ENCODE measurements at regions of chr17 and their contacts with region 1.

Region 1: DNA sequence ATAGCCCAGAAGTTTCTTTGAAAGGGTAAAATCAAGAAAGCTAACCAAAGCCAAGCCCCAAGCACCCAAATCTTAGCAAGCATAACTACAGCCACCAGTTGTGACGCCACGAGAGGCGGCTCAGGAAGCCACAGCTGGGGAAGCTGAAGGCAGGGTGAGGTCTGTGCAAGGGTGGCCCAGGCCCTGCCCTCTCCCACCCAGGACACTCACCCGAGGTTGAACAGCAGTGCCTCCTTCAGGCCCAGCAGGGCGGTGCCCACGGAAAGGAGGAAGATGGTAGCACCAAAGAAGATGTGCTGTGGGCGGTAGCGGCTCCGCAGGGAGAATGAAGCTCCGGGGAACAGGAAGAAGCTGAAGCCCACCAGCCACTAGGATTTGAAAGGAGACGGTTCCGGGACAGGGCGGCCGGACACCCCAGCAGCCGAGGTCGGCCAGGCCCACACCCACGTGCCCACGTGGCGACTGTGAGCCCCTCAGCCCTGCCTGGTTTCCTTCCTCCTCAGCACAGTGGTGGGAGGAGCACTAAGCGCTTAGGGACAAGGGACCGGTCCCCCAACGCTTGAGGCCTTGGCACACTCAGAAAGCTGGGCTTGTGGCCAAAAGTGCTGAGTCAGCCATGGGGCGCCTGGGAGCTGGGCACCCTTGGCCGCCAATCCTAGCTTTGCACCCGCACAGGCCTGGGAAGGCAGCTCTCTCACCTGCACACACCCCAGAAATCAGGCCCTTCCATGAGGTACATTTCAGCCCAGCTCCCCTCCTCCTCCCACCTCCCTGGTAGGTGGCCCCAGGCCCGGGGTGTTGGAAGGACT is 11.0 kb downstream of the CYB561 start:
- H3K4me3 ChIP-seq: no peak overlapping the region
- H3K27ac ChIP-seq: no peak overlapping the region
- H3K4me1 ChIP-seq: no peaks in the 10 kb centered on the region; the same call in 1 of the 2 replicates
- CTCF ChIP-seq: no peak

Region 2: DNA sequence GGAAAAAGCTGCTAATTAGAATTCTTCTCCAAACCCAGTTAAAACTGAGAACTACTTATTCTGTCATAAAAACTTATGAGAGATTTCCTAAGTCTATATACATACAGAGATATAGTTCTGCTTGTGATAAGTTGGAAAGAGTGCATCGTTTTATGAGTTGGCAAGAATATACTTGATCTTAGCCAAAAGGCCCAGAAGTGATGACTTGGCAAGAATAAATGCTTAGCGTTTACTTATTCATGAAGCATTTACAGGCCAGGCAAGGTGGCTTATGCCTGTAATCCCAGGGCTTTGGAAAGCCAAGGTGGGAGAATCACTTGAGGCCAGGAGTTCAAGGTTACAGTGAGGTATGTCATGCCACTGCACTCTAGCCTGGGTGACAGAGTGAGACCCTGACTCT is 70.7 kb before region 1 on chr17:
- CTCF ChIA-PET with region 1: no interaction called
- POLR2A ChIA-PET with region 1: no interaction called
- H3K4me3 ChIP-seq: no peak overlapping the region
- H3K27ac ChIP-seq: no peak overlapping the region
- H3K4me1 ChIP-seq: no peaks in the 10 kb centered on the region
- CTCF ChIP-seq: no peak

Region 3: GRCh38 chr17:63414222-63414621 is 20.9 kb before region 1 on chr17:
- CTCF ChIA-PET with region 1: no interaction called
- POLR2A ChIA-PET with region 1: no interaction called
- H3K4me3 ChIP-seq: no peak overlapping the region
- H3K27ac ChIP-seq: no peak overlapping the region
- H3K4me1 ChIP-seq: no peaks in the 10 kb centered on the region
- CTCF ChIP-seq: no peak

Region 4: GRCh38 chr17:63445979-63446691 is 11.1 kb after region 1 on chr17 and contains the start of gene CYB561:
- CTCF ChIA-PET with region 1: interaction called, 15 read pairs
- POLR2A ChIA-PET with region 1: interaction called, 4 read pairs
- H3K4me3 ChIP-seq: peak within 1 kb of the TSS; percentile 41
- H3K27ac ChIP-seq: peak within 1 kb of the TSS; percentile 48; the same call in 1 of the 2 replicates
- H3K4me1 ChIP-seq: 0 out of 2 replicates have a peak, but pooled peaks cover 2% of the 10 kb centered on the region
- CTCF ChIP-seq: no peak

Region 5: DNA sequence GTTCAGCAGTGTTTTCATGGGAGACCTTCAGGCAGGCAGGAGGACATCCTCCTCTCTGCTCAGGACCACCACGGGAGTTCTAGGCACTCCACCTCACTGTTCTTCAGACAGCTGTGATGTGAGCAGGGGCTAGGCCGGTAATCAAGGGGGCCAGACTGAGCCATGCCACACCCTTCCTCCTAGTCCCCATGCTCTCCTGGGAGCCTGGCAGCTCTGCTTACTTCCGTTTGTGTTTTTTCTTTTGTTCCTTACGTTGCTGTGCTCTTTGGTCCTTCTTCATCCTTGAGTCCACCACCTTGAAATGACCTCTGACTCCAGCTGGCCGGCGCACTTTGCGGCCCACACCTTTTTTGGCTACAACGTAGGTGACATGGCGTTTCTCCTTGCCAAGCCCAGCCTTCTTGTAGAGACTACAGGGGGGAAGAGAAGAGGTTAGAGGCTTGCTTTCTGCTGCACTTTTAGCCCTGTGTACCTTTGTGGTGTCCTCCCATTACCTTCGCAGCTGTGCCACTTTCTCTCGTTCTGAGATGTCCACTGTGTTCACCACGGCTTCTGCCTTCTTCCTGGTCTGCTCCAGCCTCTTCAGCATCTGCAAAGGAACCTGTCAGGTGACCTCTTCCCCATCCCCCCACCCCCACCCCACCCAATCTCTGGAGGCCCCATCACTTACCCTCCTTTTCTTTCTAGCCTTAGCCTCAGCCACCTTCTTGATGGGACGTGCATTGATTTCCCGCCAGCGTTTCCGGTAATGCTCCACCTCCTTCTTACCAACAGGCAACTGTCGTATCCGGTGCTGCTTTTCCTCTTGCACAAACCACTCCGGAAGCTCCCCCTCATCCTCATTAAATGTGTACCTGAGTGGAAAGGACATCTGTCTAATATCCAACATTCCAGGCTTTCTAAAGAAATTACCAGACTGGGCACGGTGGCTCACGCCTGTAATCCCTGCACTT is 384.8 kb after region 1 on chr17:
- CTCF ChIA-PET with region 1: no interaction called
- POLR2A ChIA-PET with region 1: interaction called, 12 read pairs
- H3K4me3 ChIP-seq: no peak overlapping the region
- H3K27ac ChIP-seq: no peak overlapping the region
- H3K4me1 ChIP-seq: no peaks in the 10 kb centered on the region
- CTCF ChIP-seq: no peak

Measured in HEK293 (cell line).